ENCODE measurements at regions of chr13 and their contacts with region 1.

Region 1: DNA sequence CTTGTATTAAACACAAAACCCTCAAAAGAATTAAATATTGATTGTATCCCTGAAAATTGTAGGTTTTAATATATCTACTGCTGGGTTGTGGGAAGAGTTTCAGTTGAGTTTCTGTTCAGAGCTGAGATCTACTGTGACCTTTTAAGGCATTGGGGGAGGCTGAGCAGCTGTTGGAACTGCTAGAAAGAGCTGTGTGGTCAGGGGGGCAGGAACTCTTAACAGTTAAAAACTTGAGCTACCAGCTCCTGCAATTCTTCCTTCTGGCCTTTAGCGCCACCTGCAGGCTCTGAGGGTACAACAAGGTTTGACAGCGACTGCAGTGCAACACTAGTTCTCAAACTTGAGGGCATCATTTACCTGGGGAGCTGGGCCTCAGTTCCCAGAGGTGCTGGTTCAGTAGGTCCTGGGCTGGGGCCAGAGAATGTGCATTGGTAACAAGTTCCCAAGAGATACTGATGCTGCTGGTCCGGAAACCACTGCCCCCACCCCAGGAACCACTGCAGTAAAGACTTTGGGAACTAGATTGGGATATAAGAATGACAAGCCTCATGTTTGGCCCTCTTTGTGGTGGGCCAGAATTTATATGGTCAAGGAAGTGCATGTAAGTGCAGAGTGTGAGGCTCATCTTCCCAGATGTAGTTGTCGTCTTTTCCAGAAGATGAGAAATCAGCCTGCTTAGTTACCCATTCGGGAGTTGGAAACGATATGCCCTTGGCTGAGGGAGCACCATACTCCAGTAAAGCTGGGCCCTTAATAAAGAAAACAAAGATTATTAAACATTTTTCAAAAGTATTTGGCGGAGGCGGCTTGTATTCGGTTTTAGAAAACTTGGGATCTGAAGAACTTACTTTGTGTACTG is 2.6 kb downstream of the RNASEH2B start:
- DNase-seq: peak; percentile 82
- ATAC-seq: peak; percentile 58
- H3K4me3 Mint-ChIP-seq: peak overlapping the region; percentile 93
- H3K27ac Mint-ChIP-seq: peak overlapping the region; percentile 97
- H3K4me1 Mint-ChIP-seq: peaks cover 71% of the 10 kb centered on the region
- H3K27me3 Mint-ChIP-seq: no peaks in the 10 kb centered on the region
- CTCF ChIP-seq: no peak

Region 2: DNA sequence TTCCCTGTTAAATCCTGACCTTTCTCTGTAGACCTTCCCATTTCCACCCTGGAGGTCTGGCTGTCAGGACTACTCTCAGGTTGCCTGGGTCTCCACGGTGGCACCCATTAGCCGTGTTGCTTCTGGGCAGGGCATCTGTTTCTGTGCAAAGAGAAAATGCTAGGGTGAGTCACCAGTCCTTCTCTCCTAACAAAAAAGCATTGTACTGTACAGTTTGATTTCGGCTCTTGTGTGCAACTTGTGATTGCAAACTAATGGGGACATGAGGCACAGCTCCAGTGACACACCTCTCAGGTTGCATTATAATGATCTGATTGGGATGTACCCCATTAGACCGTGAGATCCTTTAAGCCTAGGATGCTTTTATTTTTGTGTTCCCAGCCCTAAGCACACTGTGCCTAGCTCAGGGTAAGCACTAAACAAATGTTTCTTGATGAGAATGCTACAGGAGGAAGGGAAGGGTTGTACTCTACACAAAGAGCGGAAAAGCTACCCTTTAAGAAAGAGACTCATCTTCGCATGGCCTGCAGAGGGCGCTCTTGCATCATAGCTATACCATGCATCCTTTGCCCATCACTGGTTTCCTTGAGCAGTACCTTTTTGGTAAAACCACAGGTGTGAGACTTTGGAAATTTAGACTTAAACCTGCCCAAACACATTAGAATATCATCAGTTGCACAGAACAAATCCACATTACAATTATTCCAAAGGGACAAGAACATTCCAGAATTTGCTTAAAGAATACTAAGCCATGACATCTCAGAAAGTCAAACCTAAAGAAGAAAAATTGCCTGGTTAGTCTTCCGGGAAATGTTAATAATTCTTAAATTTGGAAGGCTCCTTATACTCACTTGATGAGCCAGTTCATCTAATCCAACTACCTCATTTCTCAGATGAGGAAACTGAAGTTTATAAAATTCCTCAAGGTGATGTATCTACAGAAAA is 935.6 kb before region 1 on chr13:
- CTCF ChIA-PET with region 1: interaction called, 82 read pairs
- POLR2A ChIA-PET with region 1: interaction called, 18 read pairs
- intact Hi-C with region 1: loop called (anchors 1 kb)
- DNase-seq: peak; percentile 57
- ATAC-seq: peak; percentile 86
- H3K4me3 Mint-ChIP-seq: no peak overlapping the region
- H3K27ac Mint-ChIP-seq: no peak overlapping the region
- H3K4me1 Mint-ChIP-seq: peaks cover 2% of the 10 kb centered on the region
- H3K27me3 Mint-ChIP-seq: no peaks in the 10 kb centered on the region
- CTCF ChIP-seq: no peak

Region 3: DNA sequence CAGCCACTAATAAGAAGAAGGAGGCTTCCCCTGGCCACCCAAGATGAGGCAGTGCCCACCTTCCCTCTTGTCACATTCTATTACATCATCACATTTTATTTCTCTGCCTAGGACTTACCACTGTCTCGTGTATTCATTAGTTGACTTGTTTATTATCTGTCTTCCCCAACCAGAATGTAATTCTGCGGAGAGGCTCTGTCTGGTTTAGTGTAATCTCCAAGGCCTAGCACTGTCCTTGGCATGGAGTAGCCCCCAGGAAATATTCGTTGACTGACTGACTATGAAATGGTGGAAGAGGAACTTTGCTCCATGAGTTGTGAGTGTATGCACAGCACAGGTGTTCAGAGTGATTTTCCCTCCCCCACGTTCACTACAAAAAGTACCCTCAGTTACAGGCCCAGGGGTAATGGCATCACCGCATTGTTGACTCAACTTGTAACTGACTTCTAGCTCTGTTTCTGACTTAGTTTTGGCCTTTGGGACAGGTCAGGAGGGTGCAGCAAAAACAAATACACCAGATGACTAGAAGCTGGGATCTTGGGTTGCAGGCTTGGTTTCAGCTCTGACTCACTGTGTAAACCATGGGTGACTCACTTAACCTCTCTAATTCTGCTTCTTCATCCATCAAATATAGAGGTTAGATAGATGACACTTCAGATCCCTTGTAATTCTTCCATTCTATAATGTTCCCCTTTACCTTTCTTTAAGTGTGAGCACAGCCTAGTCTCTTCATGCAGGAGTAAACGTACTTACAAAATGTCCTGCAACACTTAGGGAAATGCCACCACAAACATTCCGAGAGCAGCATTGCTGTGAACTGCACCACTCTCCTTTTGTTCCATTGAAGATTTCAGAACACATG is 667.2 kb before region 1 on chr13:
- CTCF ChIA-PET with region 1: interaction called, 3 read pairs
- POLR2A ChIA-PET with region 1: interaction called, 5 read pairs
- intact Hi-C with region 1: loop called (anchors 2 kb)
- DNase-seq: no peak
- ATAC-seq: peak; percentile 92
- H3K4me3 Mint-ChIP-seq: peak overlapping the region; percentile 2
- H3K27ac Mint-ChIP-seq: peak overlapping the region; percentile 91
- H3K4me1 Mint-ChIP-seq: peaks cover 40% of the 10 kb centered on the region
- H3K27me3 Mint-ChIP-seq: no peaks in the 10 kb centered on the region
- CTCF ChIP-seq: no peak

Region 4: GRCh38 chr13:50531917-50532899 is 380.0 kb before region 1 on chr13:
- CTCF ChIA-PET with region 1: interaction called, 3 read pairs
- POLR2A ChIA-PET with region 1: no interaction called
- intact Hi-C with region 1: loop called (anchors 1 kb)
- DNase-seq: no peak
- ATAC-seq: no peak
- H3K4me3 Mint-ChIP-seq: no peak overlapping the region
- H3K27ac Mint-ChIP-seq: no peak overlapping the region
- H3K4me1 Mint-ChIP-seq: peaks cover 15% of the 10 kb centered on the region
- H3K27me3 Mint-ChIP-seq: no peaks in the 10 kb centered on the region
- CTCF ChIP-seq: no peak

Region 5: GRCh38 chr13:50801087-50801931 is 110.9 kb before region 1 on chr13:
- CTCF ChIA-PET with region 1: interaction called, 50 read pairs
- POLR2A ChIA-PET with region 1: interaction called, 71 read pairs
- intact Hi-C with region 1: loop called (anchors 1 kb)
- DNase-seq: peak; percentile 39
- ATAC-seq: peak; percentile 74
- H3K4me3 Mint-ChIP-seq: peak overlapping the region; percentile 64
- H3K27ac Mint-ChIP-seq: peak overlapping the region; percentile 95
- H3K4me1 Mint-ChIP-seq: peaks cover 40% of the 10 kb centered on the region
- H3K27me3 Mint-ChIP-seq: no peaks in the 10 kb centered on the region
- CTCF ChIP-seq: no peak

Region 6: DNA sequence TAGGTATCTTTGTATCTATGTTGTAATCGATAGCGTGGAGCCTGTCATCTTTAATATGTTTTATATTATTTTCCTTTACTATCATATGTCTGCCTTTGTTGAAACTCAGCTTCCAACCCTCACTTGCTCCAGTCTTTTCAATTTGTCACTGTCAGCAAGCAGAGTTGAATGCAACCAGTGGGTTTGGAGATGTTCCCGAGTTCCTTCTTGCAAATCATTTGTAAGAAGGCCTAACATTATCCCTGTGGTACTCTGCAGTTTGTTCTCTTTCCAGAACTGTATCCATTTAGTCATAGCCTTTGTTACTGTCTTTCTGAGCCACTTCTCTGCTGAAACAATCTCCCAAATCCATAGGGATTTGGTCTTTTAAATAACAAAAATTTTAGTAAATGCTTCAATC is 39.2 kb after region 1 on chr13:
- CTCF ChIA-PET with region 1: no interaction called
- POLR2A ChIA-PET with region 1: no interaction called
- intact Hi-C with region 1: no loop called
- DNase-seq: no peak
- ATAC-seq: no peak
- H3K4me3 Mint-ChIP-seq: no peak overlapping the region
- H3K27ac Mint-ChIP-seq: no peak overlapping the region
- H3K4me1 Mint-ChIP-seq: peaks cover under 1% of the 10 kb centered on the region
- H3K27me3 Mint-ChIP-seq: no peaks in the 10 kb centered on the region
- CTCF ChIP-seq: no peak

Measured in activated B cell treated with CpG ODN at 0.5 μM for 24 hours (primary cell).